Naive thymus-derived CD4-positive, alpha-beta T cell (primary cell): ENCODE measurements at regions of chr5 and their contacts with region 1.

Region 1: GRCh38 chr5:179559284-179560252 is 9.2 kb downstream of the RUFY1 start:
- DNase-seq: peak; percentile 77 to 97 (median 86)
- ATAC-seq: peak; percentile 100
- H3K4me3 ChIP-seq: peak overlapping the region; percentile 75
- H3K4me3 Mint-ChIP-seq: peak overlapping the region; percentile 85 to 95 (median 91)
- H3K27ac ChIP-seq: peak overlapping the region; percentile 70
- H3K27ac Mint-ChIP-seq: peak overlapping the region; percentile 81 to 96 (median 93)
- H3K4me1 ChIP-seq: peaks cover 3 to 4% of the 10 kb centered on the region in 2 donors
- H3K4me1 Mint-ChIP-seq: peaks cover 11 to 46% (median 32%) of the 10 kb centered on the region in 7 donors
- H3K27me3 ChIP-seq: no peaks in the 10 kb centered on the region
- H3K27me3 Mint-ChIP-seq: no peaks in the 10 kb centered on the region

Region 2: GRCh38 chr5:178232124-178232919 is 1327.2 kb before region 1 on chr5 and contains the start of gene PHYKPL:
- CTCF ChIA-PET with region 1: no interaction called
- POLR2A ChIA-PET with region 1: no interaction called
- intact Hi-C with region 1: loop called in 1 of 2 experiments (anchors 10 kb)
- DNase-seq: peak; percentile 48 to 78 (median 63)
- ATAC-seq: peak; percentile 81
- H3K4me3 ChIP-seq: peak within 1 kb of the TSS; percentile 63
- H3K4me3 Mint-ChIP-seq: peak within 1 kb of the TSS; percentile 75 to 90 (median 84)
- H3K27ac ChIP-seq: peak within 1 kb of the TSS; percentile 95
- H3K27ac Mint-ChIP-seq: peak within 1 kb of the TSS; percentile 75 to 92 (median 86)
- H3K4me1 ChIP-seq: peaks cover 29 to 38% of the 10 kb centered on the region in 2 donors
- H3K4me1 Mint-ChIP-seq: peaks cover 38 to 73% (median 58%) of the 10 kb centered on the region in 7 donors
- H3K27me3 ChIP-seq: no peaks in the 10 kb centered on the region
- H3K27me3 Mint-ChIP-seq: no peaks in the 10 kb centered on the region
- total RNA-seq, gene PHYKPL: 107 to 265 (median 176) TPM

Region 3: GRCh38 chr5:179530069-179530998 is 29.2 kb before region 1 on chr5:
- CTCF ChIA-PET with region 1: no interaction called
- POLR2A ChIA-PET with region 1: interaction called, 15 read pairs
- intact Hi-C with region 1: loop called in 1 of 2 experiments (anchors 2 kb)
- DNase-seq: peak; percentile 46 to 70 (median 59)
- ATAC-seq: peak; percentile 94
- H3K4me3 ChIP-seq: peak overlapping the region; percentile 48
- H3K4me3 Mint-ChIP-seq: peak overlapping the region; percentile 62 to 81 (median 75)
- H3K27ac ChIP-seq: peak overlapping the region; percentile 47
- H3K27ac Mint-ChIP-seq: peak overlapping the region in 3 of 9 donors; percentile 12 to 38 (median 25)
- H3K4me1 ChIP-seq: peaks cover 5 to 10% of the 10 kb centered on the region in 2 donors
- H3K4me1 Mint-ChIP-seq: peaks cover 6 to 20% (median 13%) of the 10 kb centered on the region in 7 donors
- H3K27me3 ChIP-seq: no peaks in the 10 kb centered on the region
- H3K27me3 Mint-ChIP-seq: peaks cover 0 to 9% (median 0%) of the 10 kb centered on the region in 5 donors

Region 4: DNA sequence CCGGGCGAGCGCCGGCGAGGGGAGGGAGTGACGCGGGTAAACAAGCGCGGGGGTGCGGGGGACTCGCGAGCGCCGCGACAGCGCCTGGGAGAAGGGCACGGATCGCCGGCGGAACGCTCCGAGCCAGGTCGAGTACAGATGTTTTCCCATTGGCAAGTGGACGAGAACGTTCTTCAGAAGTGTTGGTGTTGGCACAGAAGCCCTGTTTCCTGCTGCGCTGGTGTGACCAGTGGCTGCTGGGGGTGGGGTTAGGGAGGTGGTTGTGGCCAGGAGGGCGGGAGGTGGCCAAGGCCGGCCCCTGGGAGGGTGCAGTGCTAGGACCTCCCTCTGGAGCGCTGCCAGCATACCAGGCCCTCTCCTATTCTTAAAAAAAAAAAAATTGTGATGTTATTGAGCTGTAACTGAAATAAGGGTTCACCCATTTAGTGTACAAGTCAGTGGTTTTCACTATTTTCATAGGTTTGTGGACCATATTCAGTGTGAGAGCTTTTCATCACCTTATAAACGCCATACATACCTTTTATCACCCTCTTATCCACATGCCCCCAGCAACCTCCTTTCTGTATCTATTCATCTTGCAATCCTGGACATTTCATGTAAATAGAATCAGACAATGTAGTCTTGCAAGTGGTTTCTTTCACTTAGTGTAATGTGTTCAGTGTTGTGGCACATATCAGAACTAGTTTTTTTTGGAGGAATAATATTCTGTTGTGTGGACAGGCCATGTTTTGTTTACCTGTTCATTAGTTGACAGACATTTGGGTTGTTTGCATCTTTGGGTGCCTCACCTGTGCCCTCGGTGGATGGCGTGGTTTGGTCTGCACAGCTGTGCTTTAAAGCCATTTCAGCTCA is 262.2 kb after region 1 on chr5:
- CTCF ChIA-PET with region 1: no interaction called
- POLR2A ChIA-PET with region 1: interaction called, 4 read pairs
- intact Hi-C with region 1: loop called (anchors 5 to 10 kb)
- DNase-seq: peak; percentile 72 to 88 (median 85)
- ATAC-seq: peak; percentile 73
- H3K4me3 ChIP-seq: peak overlapping the region; percentile 87
- H3K4me3 Mint-ChIP-seq: peak overlapping the region; percentile 88 to 98 (median 95)
- H3K27ac ChIP-seq: peak overlapping the region; percentile 96
- H3K27ac Mint-ChIP-seq: peak overlapping the region; percentile 79 to 97 (median 94)
- H3K4me1 ChIP-seq: peaks cover 31 to 36% of the 10 kb centered on the region in 2 donors
- H3K4me1 Mint-ChIP-seq: peaks cover 30 to 62% (median 45%) of the 10 kb centered on the region in 7 donors
- H3K27me3 ChIP-seq: no peaks in the 10 kb centered on the region
- H3K27me3 Mint-ChIP-seq: no peaks in the 10 kb centered on the region

Region 5: GRCh38 chr5:180494060-180494509 is 934.5 kb after region 1 on chr5 and contains the start of gene CNOT6:
- CTCF ChIA-PET with region 1: no interaction called
- POLR2A ChIA-PET with region 1: no interaction called
- intact Hi-C with region 1: loop called in 1 of 2 experiments (anchors 10 kb)
- DNase-seq: peak; percentile 91 to 98 (median 95)
- ATAC-seq: peak; percentile 98
- H3K4me3 ChIP-seq: peak within 1 kb of the TSS; percentile 83
- H3K4me3 Mint-ChIP-seq: peak within 1 kb of the TSS; percentile 85 to 99 (median 96)
- H3K27ac ChIP-seq: peak within 1 kb of the TSS; percentile 98
- H3K27ac Mint-ChIP-seq: peak within 1 kb of the TSS; percentile 84 to 98 (median 95)
- H3K4me1 ChIP-seq: peaks cover 10 to 27% of the 10 kb centered on the region in 2 donors
- H3K4me1 Mint-ChIP-seq: peaks cover 29 to 42% (median 35%) of the 10 kb centered on the region in 7 donors
- H3K27me3 ChIP-seq: no peaks in the 10 kb centered on the region
- H3K27me3 Mint-ChIP-seq: no peaks in the 10 kb centered on the region
- total RNA-seq, gene CNOT6: 22.8 to 41.9 (median 30.0) TPM